Heart right ventricle (tissue), 16 donors: ENCODE measurements at regions of chr3 and their contacts with region 1.

Region 1: GRCh38 chr3:126567696-126568438 is 9.1 kb upstream of the C3orf22 start:
- DNase-seq: no peak
- ATAC-seq: peak; percentile 34 to 91 (median 74)
- H3K4me3 ChIP-seq: no peak overlapping the region
- H3K27ac ChIP-seq: no peak overlapping the region
- H3K4me1 ChIP-seq: no peaks in the 10 kb centered on the region
- H3K27me3 ChIP-seq: peaks cover 0 to 3% (median 0%) of the 10 kb centered on the region in 7 donors
- CTCF ChIP-seq: peak in 7 of 9 donors; percentile 14 to 55 (median 41)

Region 2: DNA sequence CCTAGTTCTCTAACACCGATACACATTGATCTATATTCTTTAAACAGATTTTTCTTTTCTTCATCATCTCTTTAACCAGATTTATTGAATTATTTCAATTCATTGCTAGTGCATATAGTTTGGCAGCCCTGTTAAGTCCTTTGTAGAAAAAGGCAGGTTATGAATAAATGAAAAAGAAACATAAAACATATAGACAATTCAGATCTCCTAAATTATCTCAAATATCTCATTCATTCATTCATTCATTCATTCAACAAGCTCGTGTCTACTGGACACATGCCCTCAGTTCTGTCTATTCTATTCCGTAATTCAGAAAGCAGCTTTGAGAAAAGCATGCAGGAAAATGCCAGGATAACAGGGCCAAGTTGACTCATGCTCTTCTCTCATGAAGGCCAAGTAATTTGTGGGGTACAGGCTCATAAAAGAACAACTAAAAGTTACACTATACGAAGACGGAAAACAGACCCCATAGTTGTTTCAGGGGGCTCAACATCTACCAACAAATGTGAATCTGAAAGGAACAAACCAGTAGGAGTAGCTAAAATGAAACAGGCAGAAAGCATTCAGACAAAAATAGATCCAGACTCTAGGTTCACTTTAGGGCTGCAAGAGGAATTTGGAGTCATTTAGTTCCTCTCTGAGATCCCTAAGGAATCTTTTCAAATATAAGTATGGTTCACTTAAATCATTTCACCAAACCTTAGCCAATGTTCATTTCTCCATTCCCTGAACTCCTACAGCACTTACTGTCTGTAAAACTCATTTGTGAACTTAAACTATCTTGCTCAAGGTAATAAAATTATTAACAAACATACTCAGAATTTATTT is 1200.2 kb before region 1 on chr3:
- intact Hi-C with region 1: no loop called
- DNase-seq: no peak
- ATAC-seq: peak in 1 of 8 donors; percentile 55
- H3K4me3 ChIP-seq: no peak overlapping the region
- H3K27ac ChIP-seq: peak overlapping the region in 8 of 10 donors; percentile 2 to 58 (median 15)
- H3K4me1 ChIP-seq: peaks cover 0 to 65% (median 28%) of the 10 kb centered on the region in 9 donors
- H3K27me3 ChIP-seq: no peaks in the 10 kb centered on the region
- CTCF ChIP-seq: no peak

Region 3: GRCh38 chr3:126431103-126431534 is 136.7 kb before region 1 on chr3:
- intact Hi-C with region 1: no loop called
- DNase-seq: no peak
- ATAC-seq: no peak
- H3K4me3 ChIP-seq: no peak overlapping the region
- H3K27ac ChIP-seq: no peak overlapping the region
- H3K4me1 ChIP-seq: peaks cover 0 to 16% (median 9%) of the 10 kb centered on the region in 9 donors
- H3K27me3 ChIP-seq: no peaks in the 10 kb centered on the region
- CTCF ChIP-seq: no peak

Region 4: GRCh38 chr3:126522363-126522788 is 45.5 kb before region 1 on chr3:
- intact Hi-C with region 1: loop called in 4 of 10 experiments (anchors 5 kb)
- DNase-seq: peak in 1 of 2 donors; percentile 39
- ATAC-seq: peak in 5 of 8 donors; percentile 6 to 60 (median 47)
- H3K4me3 ChIP-seq: no peak overlapping the region
- H3K27ac ChIP-seq: no peak overlapping the region
- H3K4me1 ChIP-seq: peaks cover 0 to 13% (median 6%) of the 10 kb centered on the region in 9 donors
- H3K27me3 ChIP-seq: peaks cover 0 to 24% (median 16%) of the 10 kb centered on the region in 7 donors
- CTCF ChIP-seq: peak; percentile 78 to 96 (median 90)